Activated naive CD4-positive, alpha-beta T cell treated with anti-CD3 and anti-CD28 coated beads, Interleukin-2, amount 10 ng/mL, durations not matched to agents 7 days and 5 days (primary cell): ENCODE measurements at regions of chr1 and their contacts with region 1.

Region 1: DNA sequence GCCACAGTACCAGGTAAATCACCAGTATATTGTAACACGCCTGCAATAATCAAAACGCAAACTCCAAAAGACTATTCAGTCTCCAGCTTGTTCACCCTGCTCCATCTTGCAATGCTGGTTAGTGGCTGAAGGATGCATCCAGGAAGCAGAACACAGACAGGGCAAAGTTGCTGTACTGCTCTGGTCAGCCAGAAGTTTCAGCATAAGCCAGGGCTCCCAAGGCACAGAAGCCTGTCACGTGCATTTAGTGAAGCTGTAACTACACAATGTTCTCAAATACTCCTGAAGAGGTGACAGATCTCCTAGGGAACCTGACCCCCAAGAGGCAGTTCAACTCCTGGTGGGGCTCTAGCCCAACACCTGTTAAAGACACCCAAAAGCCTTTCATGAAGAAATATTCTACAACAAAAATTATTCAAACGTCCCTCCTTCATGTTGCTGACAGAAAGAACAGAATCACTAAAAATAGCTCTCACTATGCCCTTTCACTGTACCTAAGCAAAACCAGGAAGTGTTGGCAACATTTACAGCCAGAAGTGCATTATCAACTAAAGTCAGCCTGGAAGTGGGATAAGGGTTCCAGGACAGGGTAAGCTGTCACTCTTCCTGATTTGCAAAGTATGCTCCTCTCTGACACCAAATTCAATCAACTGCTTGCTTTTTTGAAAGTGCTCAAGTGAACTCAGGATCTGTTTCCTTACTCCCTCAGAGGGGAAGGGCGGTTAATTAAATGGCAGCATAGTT is 52.1 kb downstream of the SLC35D1 start:
- DNase-seq: no peak
- H3K4me3 Mint-ChIP-seq: no peak overlapping the region
- H3K27ac Mint-ChIP-seq: peak overlapping the region; percentile 29
- H3K4me1 Mint-ChIP-seq: peaks cover 9% of the 10 kb centered on the region
- H3K27me3 Mint-ChIP-seq: no peaks in the 10 kb centered on the region

Region 2: DNA sequence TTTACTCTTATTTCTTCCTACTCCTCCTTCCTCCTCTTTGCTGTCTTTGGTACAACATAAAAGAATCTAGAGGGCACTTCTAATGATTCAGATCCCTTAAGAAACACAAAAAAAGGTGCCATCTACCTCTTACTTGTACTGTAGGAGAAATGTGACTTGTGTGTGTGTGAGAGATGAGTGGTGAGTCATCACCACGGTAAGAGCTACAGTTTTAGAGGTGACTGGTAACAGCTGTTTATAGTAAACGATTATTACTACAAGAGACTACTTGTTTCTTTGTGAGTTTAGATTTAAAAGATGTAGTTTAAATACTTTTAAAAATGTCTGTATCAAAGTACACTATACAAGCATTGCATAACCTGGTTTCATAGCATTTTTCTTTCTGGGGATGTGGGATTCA is 11.7 kb after region 1 on chr1:
- CTCF ChIA-PET with region 1: interaction called, 10 read pairs
- DNase-seq: no peak
- H3K4me3 Mint-ChIP-seq: no peak overlapping the region
- H3K27ac Mint-ChIP-seq: no peak overlapping the region
- H3K4me1 Mint-ChIP-seq: peaks cover 2% of the 10 kb centered on the region
- H3K27me3 Mint-ChIP-seq: no peaks in the 10 kb centered on the region